ENCODE measurements at regions of chr2 and their contacts with region 1.

Region 1: DNA sequence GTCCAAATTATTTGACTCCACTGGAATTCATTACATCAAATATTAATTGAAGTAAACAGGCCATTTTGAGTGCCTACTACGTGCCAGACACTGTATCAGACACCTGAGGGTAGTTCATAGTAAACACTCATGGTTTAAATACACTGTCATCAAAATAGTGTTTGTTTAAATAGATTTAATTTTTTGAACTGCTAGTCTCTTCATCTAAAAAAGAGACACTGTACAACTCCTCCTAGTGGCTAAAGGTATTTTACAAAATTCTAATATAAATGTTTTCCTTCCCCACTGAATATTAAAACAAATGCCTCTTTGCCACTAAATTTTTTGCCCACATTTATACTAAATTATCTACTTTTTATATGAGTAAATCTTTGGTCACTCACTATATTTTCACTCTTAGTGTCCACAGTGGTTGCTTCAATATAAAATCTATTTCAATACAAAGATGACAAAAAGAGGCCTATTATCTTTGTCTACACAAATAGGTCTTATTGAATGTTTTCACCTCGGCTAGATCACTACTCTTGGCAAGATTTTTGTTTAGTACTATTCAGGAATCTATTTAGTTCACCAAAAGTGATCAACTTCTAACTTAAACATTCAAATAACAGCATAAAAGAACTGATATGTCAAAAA is 122.1 kb downstream of the TMEM247 start:
- DNase-seq: no peak
- ATAC-seq: no peak
- H3K4me3 ChIP-seq: no peak overlapping the region
- H3K27ac ChIP-seq: no peak overlapping the region
- H3K4me1 ChIP-seq: peaks cover 0 to 3% (median 0%) of the 10 kb centered on the region in 9 donors
- H3K27me3 ChIP-seq: no peaks in the 10 kb centered on the region
- CTCF ChIP-seq: peak in 8 of 9 donors; percentile 31 to 64 (median 57)

Region 2: DNA sequence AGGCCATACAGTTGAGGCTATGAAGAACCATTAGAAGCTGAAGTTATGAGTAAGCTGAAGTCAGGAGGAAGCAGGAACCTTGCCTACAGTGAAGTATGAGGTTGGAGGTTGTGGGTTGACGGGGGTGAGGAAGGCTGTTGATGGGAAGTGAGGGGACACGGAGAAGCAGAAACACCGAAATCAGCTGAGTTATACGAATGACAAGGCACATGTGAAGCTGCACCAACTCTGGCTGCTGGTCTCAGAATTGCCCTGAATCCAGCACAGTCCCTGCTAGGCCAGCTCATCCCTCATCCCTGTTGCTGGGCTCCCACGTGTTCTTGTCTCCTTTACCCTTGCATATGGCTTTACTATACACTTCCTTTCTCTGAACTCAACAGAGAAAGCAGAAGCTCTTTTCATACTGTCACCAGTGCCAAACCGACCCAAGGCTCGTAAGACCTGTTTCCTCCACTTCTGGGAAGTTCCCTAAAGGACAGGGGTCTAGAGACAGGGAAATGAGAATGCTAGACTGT is 131.3 kb before region 1 on chr2:
- intact Hi-C with region 1: loop called in 3 of 10 experiments (anchors 5 kb)
- DNase-seq: no peak
- ATAC-seq: peak in 7 of 8 donors; percentile 33 to 77 (median 61)
- H3K4me3 ChIP-seq: no peak overlapping the region
- H3K27ac ChIP-seq: peak overlapping the region in 1 of 10 donors; percentile 57
- H3K4me1 ChIP-seq: peaks cover 0 to 19% (median 0%) of the 10 kb centered on the region in 9 donors
- H3K27me3 ChIP-seq: no peaks in the 10 kb centered on the region
- CTCF ChIP-seq: no peak

Region 3: DNA sequence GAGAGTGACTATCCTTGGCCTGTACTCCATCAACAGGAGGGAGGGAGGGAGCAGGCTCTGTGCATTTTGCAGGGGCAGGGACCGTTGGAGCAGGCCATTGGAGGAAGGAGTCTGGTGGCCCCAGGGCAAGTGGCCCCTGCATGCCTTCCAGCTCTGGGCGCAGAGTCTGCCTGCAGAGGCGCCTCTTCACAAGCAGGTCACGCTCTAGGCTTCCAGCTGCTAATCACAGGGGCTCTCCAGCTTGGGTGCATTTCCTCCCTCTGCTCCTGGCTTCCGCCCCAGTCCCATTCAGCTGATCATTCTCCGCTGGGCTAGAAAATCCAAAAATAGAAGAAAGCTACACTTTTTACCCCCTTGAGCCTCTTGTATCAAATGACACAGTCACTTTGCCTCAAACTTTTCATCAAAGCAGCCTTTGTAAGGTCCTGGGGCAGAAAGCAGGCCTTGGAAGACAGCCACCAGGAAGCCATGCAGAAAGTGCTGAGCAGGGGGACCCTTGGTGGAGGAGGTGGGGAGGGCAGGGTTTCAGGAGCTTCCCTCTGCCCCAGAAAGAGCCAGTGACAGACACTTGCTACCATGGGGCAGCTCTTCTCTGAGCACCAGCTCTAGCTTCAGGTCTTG is 110.8 kb before region 1 on chr2:
- intact Hi-C with region 1: loop called in 1 of 10 experiments (anchors 10 kb)
- DNase-seq: peak; percentile 61 to 80
- ATAC-seq: peak; percentile 78 to 91 (median 85)
- H3K4me3 ChIP-seq: no peak overlapping the region
- H3K27ac ChIP-seq: peak overlapping the region in 9 of 10 donors; percentile 40 to 89 (median 83)
- H3K4me1 ChIP-seq: peaks cover 16 to 64% (median 44%) of the 10 kb centered on the region in 9 donors
- H3K27me3 ChIP-seq: no peaks in the 10 kb centered on the region
- CTCF ChIP-seq: peak in 6 of 9 donors; percentile 25 to 57 (median 41)

Region 4: GRCh38 chr2:46521215-46521683 is 80.2 kb before region 1 on chr2:
- intact Hi-C with region 1: loop called in 1 of 10 experiments (anchors 10 kb)
- DNase-seq: peak; percentile 63 to 71
- ATAC-seq: peak; percentile 76 to 89 (median 82)
- H3K4me3 ChIP-seq: no peak overlapping the region
- H3K27ac ChIP-seq: peak overlapping the region; percentile 28 to 72 (median 51)
- H3K4me1 ChIP-seq: peaks cover 5 to 35% (median 25%) of the 10 kb centered on the region in 9 donors
- H3K27me3 ChIP-seq: no peaks in the 10 kb centered on the region
- CTCF ChIP-seq: no peak

Region 5: GRCh38 chr2:46719487-46719886 is 118.0 kb after region 1 on chr2:
- intact Hi-C with region 1: no loop called
- DNase-seq: no peak
- ATAC-seq: peak in 5 of 8 donors; percentile 29 to 65 (median 55)
- H3K4me3 ChIP-seq: no peak overlapping the region
- H3K27ac ChIP-seq: peak overlapping the region in 1 of 10 donors; percentile 1
- H3K4me1 ChIP-seq: peaks cover 11 to 72% (median 66%) of the 10 kb centered on the region in 9 donors
- H3K27me3 ChIP-seq: no peaks in the 10 kb centered on the region
- CTCF ChIP-seq: no peak

Region 6: GRCh38 chr2:46827632-46828438 is 226.4 kb after region 1 on chr2:
- intact Hi-C with region 1: no loop called
- DNase-seq: no peak
- ATAC-seq: peak in 2 of 8 donors; percentile 32 to 43
- H3K4me3 ChIP-seq: no peak overlapping the region
- H3K27ac ChIP-seq: no peak overlapping the region
- H3K4me1 ChIP-seq: peaks cover 0 to 11% (median 0%) of the 10 kb centered on the region in 9 donors
- H3K27me3 ChIP-seq: no peaks in the 10 kb centered on the region
- CTCF ChIP-seq: no peak